Esophagus squamous epithelium (tissue), 5 donors: ENCODE measurements at regions of chr5 and their contacts with region 1.

Region 1: DNA sequence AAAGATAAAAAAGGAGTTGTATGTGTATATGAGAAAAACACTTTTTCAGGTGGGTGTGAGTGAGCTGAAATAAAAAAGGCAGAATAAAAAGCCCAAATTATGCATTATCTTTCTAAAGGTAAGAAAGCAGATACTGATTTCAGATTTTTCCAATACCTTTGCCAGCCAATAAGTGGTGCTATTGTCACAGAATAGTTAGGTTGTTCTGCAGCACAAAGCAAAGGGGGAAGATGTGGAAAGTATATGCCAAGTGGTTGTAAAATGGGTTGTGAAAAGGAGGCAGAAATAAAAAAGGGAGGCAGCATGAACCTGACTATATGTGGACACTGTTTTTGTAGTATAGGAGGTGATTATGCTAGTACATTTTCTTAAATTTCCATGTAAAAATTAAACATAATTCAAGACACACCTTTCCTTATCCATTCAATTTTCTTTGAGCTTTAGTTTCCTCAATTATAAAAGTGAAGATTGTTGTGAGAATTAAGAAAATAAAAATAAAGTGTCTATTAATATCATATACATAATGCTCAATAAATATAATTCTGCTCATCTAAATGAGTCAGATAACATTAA is 106.7 kb downstream of the SMIM15 start:
- DNase-seq: no peak
- H3K4me3 ChIP-seq: no peak overlapping the region
- H3K27ac ChIP-seq: no peak overlapping the region
- H3K4me1 ChIP-seq: peaks cover 0 to 7% (median 0%) of the 10 kb centered on the region in 3 donors
- H3K27me3 ChIP-seq: no peaks in the 10 kb centered on the region
- CTCF ChIP-seq: peak in 5 of 6 experiments; percentile 45 to 73 (median 49)
- POLR2A ChIP-seq: no peak

Region 2: DNA sequence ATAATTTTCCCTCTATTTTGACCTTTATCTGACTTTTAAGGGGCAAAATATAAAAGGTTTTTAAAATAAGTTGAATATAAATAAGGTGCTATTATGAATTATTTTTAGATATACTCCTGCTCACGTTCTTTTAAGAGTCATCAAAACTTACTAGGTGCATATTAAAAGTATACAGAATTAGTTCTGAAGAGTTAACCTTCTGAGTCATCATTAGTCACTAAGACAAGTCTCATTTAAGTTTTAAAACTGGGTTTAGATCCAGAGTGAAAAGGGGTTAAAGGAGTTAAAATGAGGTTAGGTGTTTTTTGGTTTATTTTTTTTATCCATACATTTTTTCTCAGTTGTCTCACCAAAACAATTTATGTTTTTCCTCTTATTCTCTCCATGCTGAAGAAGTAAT is 65.0 kb after region 1 on chr5:
- intact Hi-C with region 1: no loop called
- DNase-seq: no peak
- H3K4me3 ChIP-seq: no peak overlapping the region
- H3K27ac ChIP-seq: no peak overlapping the region
- H3K4me1 ChIP-seq: peaks cover 0 to 4% (median 0%) of the 10 kb centered on the region in 3 donors
- H3K27me3 ChIP-seq: no peaks in the 10 kb centered on the region
- CTCF ChIP-seq: no peak
- POLR2A ChIP-seq: no peak

Region 3: DNA sequence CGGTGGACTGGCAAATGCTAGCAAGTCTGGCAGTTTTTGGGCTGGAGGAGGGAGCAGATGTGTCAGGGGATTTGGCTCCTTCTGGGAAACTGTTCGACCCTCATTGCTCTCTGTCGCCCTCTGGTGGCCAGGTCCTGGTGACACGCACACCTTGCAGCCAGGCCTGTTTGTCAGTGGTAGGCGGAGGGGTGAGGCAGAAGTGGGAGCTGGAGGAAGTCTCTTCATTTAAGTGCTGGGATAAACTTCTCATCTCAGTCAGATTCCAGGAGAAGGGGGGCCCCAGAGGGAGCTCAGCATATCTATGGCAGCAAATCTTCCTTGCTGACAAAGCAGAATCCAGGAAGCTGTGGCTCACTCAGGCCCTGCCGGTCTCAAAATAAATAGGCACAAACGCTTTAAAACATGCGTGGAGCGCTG is 603.1 kb after region 1 on chr5:
- intact Hi-C with region 1: loop called (anchors 10 kb)
- DNase-seq: peak; percentile 8
- H3K4me3 ChIP-seq: no peak overlapping the region
- H3K27ac ChIP-seq: no peak overlapping the region
- H3K4me1 ChIP-seq: peaks cover 0 to 4% (median 0%) of the 10 kb centered on the region in 3 donors
- H3K27me3 ChIP-seq: peaks cover 0 to 12% (median 0%) of the 10 kb centered on the region in 4 donors
- CTCF ChIP-seq: peak; percentile 73 to 97 (median 92)
- POLR2A ChIP-seq: no peak